Activated naive CD4-positive, alpha-beta T cell treated with anti-CD3 and anti-CD28 coated beads for 36 hours (primary cell): ENCODE measurements at regions of chr17 and their contacts with region 1.

Region 1: DNA sequence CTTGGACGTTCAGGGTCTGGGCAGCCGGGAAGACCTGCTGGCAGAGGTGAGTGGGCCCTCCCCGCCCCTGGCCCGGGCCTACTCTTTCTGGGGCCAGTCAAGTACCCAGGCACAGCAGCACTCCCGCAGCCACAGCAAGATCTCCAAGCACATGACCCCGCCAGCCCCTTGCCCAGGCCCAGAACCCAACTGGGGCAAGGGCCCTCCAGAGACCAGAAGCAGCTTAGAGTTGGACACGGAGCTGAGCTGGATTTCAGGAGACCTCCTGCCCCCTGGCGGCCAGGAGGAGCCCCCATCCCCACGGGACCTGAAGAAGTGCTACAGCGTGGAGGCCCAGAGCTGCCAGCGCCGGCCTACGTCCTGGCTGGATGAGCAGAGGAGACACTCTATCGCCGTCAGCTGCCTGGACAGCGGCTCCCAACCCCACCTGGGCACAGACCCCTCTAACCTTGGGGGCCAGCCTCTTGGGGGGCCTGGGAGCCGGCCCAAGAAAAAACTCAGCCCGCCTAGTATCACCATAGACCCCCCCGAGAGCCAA is 8.6 kb upstream of the ABCC3 start:
- DNase-seq: peak; percentile 76
- H3K4me3 Mint-ChIP-seq: no peak overlapping the region
- H3K27ac Mint-ChIP-seq: no peak overlapping the region
- H3K4me1 Mint-ChIP-seq: no peaks in the 10 kb centered on the region
- H3K27me3 Mint-ChIP-seq: peaks cover 33% of the 10 kb centered on the region

Region 2: GRCh38 chr17:50487213-50488096 is 138.7 kb before region 1 on chr17:
- CTCF ChIA-PET with region 1: interaction called, 11 read pairs
- intact Hi-C with region 1: loop called (anchors 1 kb)
- DNase-seq: peak; percentile 36
- H3K4me3 Mint-ChIP-seq: no peak overlapping the region
- H3K27ac Mint-ChIP-seq: peak overlapping the region; percentile 61
- H3K4me1 Mint-ChIP-seq: peaks cover 8% of the 10 kb centered on the region
- H3K27me3 Mint-ChIP-seq: no peaks in the 10 kb centered on the region

Region 3: GRCh38 chr17:50547035-50547735 is 78.9 kb before region 1 on chr17 and contains the start of gene SPATA20:
- CTCF ChIA-PET with region 1: interaction called, 29 read pairs
- intact Hi-C with region 1: loop called (anchors 1 kb)
- DNase-seq: peak; percentile 92
- H3K4me3 Mint-ChIP-seq: peak within 1 kb of the TSS; percentile 74
- H3K27ac Mint-ChIP-seq: peak within 1 kb of the TSS; percentile 67
- H3K4me1 Mint-ChIP-seq: peaks cover 9% of the 10 kb centered on the region
- H3K27me3 Mint-ChIP-seq: peaks cover 2% of the 10 kb centered on the region
- total RNA-seq, gene SPATA20: 15.8 to 16.1 TPM

Region 4: GRCh38 chr17:50589095-50589705 is 36.9 kb before region 1 on chr17:
- CTCF ChIA-PET with region 1: no interaction called
- intact Hi-C with region 1: no loop called
- DNase-seq: no peak
- H3K4me3 Mint-ChIP-seq: no peak overlapping the region
- H3K27ac Mint-ChIP-seq: no peak overlapping the region
- H3K4me1 Mint-ChIP-seq: no peaks in the 10 kb centered on the region
- H3K27me3 Mint-ChIP-seq: no peaks in the 10 kb centered on the region

Region 5: DNA sequence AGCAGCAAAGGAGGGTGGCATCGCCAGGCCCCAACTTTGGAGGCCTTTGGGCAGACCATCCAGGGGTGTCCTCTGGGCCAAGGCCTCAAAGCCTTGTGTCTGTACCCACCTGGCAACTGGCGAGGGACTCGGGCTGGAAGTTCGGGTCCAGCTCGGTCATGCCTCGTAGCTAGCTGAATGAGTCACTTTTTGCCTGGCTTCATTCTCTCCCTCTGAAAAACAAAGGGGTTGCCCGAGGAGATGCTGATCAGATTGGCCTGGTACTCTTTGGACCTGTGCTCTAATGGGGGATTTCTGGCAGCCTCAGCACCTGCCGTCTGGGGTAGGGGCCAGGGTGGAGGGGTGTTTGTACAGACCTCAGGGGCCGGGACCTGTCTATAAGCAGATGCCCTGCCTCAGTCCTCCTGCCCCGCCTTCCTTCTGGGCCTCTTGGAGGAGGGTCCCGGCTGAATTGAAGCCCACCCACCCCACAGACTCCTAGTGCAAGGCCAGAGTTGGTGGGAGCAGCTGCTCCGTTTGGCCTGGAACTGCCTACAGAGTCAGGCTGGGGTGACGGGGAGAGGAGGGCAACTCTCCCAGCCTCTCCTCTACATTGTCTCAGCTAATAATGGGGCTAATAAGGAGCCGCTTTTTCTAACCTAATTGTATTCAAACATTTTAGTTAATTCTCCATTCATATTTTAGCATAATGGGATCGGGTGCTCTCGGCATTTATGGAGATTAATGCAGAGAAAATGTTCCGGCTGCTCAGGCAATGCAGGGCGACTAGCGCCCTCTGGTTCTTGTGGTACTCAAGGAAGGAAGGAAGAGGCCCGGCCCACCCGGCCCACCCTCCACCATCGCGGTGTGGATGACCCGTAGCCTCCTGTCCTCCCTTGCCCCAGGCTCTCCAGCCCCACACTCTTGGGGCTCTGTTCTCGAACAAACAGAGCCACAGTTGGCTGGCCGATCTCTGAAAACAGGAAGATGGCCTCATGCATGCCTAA is 12.8 kb before region 1 on chr17:
- CTCF ChIA-PET with region 1: interaction called, 10 read pairs
- intact Hi-C with region 1: no loop called
- DNase-seq: peak; percentile 35
- H3K4me3 Mint-ChIP-seq: no peak overlapping the region
- H3K27ac Mint-ChIP-seq: no peak overlapping the region
- H3K4me1 Mint-ChIP-seq: peaks cover 3% of the 10 kb centered on the region
- H3K27me3 Mint-ChIP-seq: peaks cover 3% of the 10 kb centered on the region

Region 6: DNA sequence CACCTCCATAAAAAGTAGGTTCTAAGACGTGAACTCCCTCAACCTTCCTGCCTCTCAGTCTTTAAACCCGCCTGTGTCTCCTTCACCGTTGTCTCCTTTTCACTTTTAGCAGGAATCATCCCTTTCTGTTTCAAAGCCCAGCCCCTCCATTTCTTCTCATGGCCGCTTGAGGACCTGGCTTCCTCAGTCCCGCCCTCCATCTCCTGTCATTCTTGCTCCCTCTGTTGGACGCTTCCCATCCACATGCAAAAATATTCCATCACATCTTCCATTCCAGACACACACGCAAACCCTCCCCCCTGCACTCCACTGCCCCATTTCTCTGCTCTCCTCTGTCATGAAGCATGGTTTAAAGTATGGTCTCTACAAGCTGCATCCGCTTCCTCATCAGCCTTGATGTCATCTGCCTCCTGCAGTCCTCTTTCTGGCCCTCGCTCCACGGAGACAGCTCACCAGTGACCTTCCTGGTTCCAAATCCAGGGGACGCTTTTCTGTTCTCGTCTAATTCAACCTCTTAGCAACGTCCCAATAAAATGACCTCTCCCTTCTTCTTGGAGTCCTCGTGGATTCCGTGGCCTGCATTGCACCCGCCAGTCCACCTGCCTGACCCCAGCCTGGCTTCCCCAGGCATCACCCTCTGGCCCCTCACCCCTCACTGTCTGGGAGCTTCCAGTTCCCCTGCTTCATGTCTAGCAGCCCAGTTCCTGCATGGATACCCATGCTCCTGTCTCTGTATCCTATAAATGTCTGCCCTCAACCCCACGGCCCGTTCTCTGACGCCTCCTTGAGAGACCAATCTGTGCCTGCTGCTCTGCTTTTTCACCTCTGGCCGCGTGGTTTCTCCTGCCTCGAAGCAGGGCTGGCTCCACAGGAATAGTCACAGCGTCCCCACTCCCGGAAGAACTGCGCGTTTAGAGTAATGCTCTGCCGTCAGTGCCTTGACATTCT is 55.4 kb after region 1 on chr17:
- CTCF ChIA-PET with region 1: interaction called, 7 read pairs
- intact Hi-C with region 1: loop called (anchors 1 kb)
- DNase-seq: no peak
- H3K4me3 Mint-ChIP-seq: no peak overlapping the region
- H3K27ac Mint-ChIP-seq: no peak overlapping the region
- H3K4me1 Mint-ChIP-seq: peaks cover 4% of the 10 kb centered on the region
- H3K27me3 Mint-ChIP-seq: peaks cover 3% of the 10 kb centered on the region

Region 7: DNA sequence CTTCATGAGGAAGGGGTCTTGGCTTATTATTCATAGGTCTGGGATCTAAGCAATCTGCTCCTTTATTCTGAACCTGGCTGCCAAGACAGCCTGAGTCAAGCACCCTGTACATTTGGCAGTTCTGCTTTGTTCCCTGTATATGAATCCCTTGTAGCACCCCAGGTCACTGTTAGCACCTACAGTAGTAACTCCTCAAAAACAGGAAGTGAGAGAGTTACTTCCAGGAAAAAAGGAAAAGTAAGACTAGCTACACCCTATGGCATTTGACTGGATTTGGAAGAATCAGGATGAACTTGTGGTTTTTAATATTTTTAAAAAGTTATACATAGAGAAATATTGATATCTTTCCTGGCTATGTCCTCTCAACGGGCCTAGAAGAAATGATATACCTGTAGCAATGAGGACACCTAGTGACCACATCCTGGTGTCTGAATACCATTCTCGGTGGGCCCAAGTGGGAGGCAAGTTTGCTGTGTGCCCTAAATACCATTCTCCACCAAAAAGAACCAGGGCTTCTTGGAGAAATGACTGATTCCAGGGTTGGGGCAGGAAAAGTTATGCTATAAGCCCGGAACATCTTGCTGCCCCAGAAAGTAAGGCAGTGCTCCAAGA is 71.7 kb after region 1 on chr17:
- CTCF ChIA-PET with region 1: interaction called, 50 read pairs
- intact Hi-C with region 1: loop called (anchors 1 kb)
- DNase-seq: no peak
- H3K4me3 Mint-ChIP-seq: no peak overlapping the region
- H3K27ac Mint-ChIP-seq: no peak overlapping the region
- H3K4me1 Mint-ChIP-seq: peaks cover 27% of the 10 kb centered on the region
- H3K27me3 Mint-ChIP-seq: no peaks in the 10 kb centered on the region

Region 8: DNA sequence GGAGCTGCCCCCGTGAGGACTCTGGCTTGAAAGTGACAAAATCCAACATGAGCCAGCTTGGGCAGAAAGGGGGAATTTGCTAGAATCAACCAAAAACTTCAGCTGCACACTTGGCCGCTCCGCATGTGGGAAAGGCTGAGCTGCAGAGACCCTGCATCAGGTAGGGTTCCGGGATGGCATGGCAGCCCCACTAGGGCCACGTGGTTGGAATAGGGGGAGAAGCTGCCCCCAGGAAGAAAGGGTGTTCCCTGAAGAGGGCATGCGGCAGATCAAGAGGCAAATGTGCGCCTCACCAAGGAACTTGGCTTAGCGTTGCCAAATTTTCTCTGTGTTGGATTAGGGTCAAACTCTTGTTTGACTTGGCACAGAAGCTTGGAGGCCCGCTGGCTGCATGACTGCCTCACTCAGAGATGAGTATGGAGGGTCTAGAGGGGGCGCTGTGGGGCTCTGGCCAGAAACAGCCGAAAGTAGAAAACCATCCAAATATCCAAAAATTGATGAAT is 180.1 kb after region 1 on chr17:
- CTCF ChIA-PET with region 1: no interaction called
- intact Hi-C with region 1: no loop called
- DNase-seq: no peak
- H3K4me3 Mint-ChIP-seq: no peak overlapping the region
- H3K27ac Mint-ChIP-seq: no peak overlapping the region
- H3K4me1 Mint-ChIP-seq: no peaks in the 10 kb centered on the region
- H3K27me3 Mint-ChIP-seq: no peaks in the 10 kb centered on the region

Region 9: DNA sequence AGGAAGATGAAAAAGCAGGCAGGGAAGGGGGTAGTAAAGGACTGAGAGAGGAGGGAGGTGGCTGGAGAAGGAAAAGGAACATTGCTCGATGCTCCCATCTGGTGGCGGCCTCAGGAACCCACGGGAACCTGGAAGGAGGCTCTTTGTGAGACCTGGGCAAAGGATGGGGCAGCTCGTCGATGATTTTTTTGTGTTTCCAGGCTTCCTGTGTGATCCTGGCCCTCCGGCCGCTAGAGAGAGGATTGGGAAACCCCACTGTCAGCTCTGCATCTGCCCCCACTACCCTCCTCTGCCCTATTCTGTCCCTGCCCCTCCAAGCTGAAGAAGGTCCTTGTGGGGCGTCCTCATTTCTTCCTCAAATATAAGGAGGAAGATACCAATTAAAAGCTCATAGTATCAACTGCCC is 215.8 kb after region 1 on chr17:
- CTCF ChIA-PET with region 1: no interaction called
- intact Hi-C with region 1: loop called (anchors 2 kb)
- DNase-seq: peak; percentile 73
- H3K4me3 Mint-ChIP-seq: no peak overlapping the region
- H3K27ac Mint-ChIP-seq: no peak overlapping the region
- H3K4me1 Mint-ChIP-seq: peaks cover 3% of the 10 kb centered on the region
- H3K27me3 Mint-ChIP-seq: no peaks in the 10 kb centered on the region